ENCODE measurements at regions of chr12 and their contacts with region 1.

Region 1: GRCh38 chr12:127485528-127485927 is 781.4 kb upstream of the TMEM132C start:
- DNase-seq: peak; percentile 96
- H3K4me3 ChIP-seq: no peak overlapping the region
- H3K27ac ChIP-seq: no peak overlapping the region
- H3K4me1 ChIP-seq: peaks cover 6% of the 10 kb centered on the region; the same call in 1 of the 2 replicates
- H3K27me3 ChIP-seq: no peaks in the 10 kb centered on the region

Region 2: DNA sequence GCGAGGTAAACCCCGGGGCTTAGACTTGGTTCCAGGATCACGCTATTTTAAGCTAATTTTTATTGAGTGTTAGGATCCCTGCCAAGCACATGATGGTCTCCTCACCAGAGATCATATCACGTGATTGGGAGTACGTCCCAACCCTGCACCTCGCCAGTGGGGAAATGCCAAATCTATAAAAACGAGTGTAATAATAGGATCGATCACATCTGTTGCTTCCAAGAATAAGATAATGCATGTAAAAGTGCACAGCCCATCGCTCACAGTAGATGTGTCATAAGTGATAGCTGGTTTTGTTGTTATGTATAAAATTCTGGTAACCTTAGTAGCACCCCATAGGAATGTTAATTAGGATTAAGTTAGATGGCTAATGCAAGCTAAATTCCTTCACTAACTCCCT is 200.4 kb after region 1 on chr12:
- in situ Hi-C with region 1: loop called (anchors 10 kb)
- DNase-seq: no peak
- H3K4me3 ChIP-seq: no peak overlapping the region
- H3K27ac ChIP-seq: no peak overlapping the region
- H3K4me1 ChIP-seq: no peaks in the 10 kb centered on the region
- H3K27me3 ChIP-seq: no peaks in the 10 kb centered on the region

Region 3: DNA sequence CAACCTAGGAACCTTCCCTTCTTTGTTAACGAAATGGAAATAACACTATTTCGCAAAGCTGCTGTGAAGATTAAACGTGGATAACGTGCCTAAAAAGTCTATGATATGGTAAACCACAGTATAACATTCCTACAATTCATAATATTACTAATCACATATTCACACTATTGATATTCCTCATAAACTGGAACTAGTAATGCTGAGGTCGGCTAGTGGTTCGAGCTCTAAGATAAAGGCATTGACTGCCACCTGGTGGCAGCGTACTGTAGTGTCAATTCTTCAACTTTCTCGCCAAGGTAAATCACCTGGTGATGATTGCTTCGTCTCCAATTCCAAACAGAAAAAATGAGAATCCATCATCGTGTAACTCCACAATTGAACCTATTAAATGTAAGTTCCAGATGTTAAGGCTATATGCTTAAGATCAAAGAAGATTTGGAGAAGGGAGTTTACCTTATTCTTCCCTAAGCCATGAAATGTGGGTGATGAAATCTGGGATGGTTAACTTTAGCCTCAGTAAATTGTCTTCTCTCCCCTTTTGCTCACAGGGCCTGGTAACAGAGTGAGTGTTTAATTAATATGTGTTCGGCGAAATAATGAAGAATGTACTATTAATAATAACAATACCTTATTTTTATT is 584.0 kb after region 1 on chr12:
- in situ Hi-C with region 1: loop called (anchors 25 kb)
- DNase-seq: peak; percentile 79
- H3K4me3 ChIP-seq: no peak overlapping the region
- H3K27ac ChIP-seq: no peak overlapping the region
- H3K4me1 ChIP-seq: no peaks in the 10 kb centered on the region
- H3K27me3 ChIP-seq: peaks cover 6% of the 10 kb centered on the region; the same call in 1 of the 2 replicates

Measured in GM23248 (cell line).